Activated CD4-positive, alpha-beta T cell treated with anti-CD3 and anti-CD28 coated beads, Interleukin-2, amount 10 ng/mL, durations not matched to agents 24 days and 14 days (primary cell): ENCODE measurements at regions of chr15 and their contacts with region 1.

Region 1: DNA sequence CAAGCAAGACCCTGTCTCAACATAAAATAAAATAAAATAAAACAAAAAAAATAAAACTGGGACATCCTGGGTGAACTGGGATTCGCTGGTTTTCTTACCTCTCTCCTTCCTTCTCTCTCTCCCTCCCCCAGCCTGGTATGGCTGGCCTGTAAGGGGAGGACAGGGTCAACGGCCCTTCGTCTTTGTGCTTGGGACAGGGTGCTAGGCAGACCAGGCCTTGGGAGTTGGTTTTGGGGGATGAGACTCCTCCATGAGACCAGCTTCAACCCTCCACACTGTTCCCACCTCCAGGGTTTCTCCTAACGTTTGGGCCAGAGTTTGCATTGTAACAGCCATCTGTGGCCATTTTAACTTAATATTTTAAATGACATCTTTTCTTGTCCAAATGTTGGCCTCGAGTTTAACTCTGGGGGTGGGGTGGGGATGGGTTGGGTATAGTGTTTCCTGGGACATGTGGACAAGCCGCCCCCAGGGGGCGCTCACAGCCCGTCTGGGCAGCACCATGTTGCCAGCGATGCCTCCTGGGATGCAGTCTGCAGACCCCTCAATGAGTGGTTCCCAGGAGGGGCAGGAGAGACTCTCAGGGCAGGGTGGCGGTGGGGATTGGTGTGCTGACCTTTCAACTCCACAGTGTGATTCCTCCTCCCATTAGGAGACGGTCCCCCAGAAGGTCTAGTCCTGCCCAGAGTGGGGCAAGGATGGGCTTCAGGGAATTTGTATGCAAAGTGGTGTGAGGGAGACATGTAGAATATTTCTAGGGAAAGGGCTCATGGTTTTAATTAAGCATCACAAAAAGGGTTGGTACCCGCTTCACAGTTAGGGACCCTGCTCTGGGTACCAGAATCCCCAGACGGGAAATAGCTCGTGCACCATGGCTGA is 37.7 kb upstream of the LCTL start:
- DNase-seq: peak; percentile 90
- H3K4me3 Mint-ChIP-seq: no peak overlapping the region
- H3K27ac Mint-ChIP-seq: no peak overlapping the region
- H3K4me1 Mint-ChIP-seq: peaks cover under 1% of the 10 kb centered on the region
- H3K27me3 Mint-ChIP-seq: peaks cover 9% of the 10 kb centered on the region

Region 2: GRCh38 chr15:66535016-66535415 is 68.5 kb before region 1 on chr15:
- intact Hi-C with region 1: no loop called
- DNase-seq: no peak
- H3K4me3 Mint-ChIP-seq: no peak overlapping the region
- H3K27ac Mint-ChIP-seq: no peak overlapping the region
- H3K4me1 Mint-ChIP-seq: no peaks in the 10 kb centered on the region
- H3K27me3 Mint-ChIP-seq: no peaks in the 10 kb centered on the region

Region 3: GRCh38 chr15:66566963-66567531 is 36.5 kb before region 1 on chr15:
- intact Hi-C with region 1: no loop called
- DNase-seq: peak; percentile 87
- H3K4me3 Mint-ChIP-seq: peak overlapping the region; percentile 43
- H3K27ac Mint-ChIP-seq: peak overlapping the region; percentile 56
- H3K4me1 Mint-ChIP-seq: peaks cover 7% of the 10 kb centered on the region
- H3K27me3 Mint-ChIP-seq: no peaks in the 10 kb centered on the region

Region 4: GRCh38 chr15:66774001-66774814 is 170.7 kb after region 1 on chr15:
- intact Hi-C with region 1: loop called (anchors 1 kb)
- DNase-seq: peak; percentile 86
- H3K4me3 Mint-ChIP-seq: no peak overlapping the region
- H3K27ac Mint-ChIP-seq: no peak overlapping the region
- H3K4me1 Mint-ChIP-seq: no peaks in the 10 kb centered on the region
- H3K27me3 Mint-ChIP-seq: no peaks in the 10 kb centered on the region

Region 5: GRCh38 chr15:66851226-66852071 is 247.9 kb after region 1 on chr15:
- intact Hi-C with region 1: loop called (anchors 1 kb)
- DNase-seq: peak; percentile 93
- H3K4me3 Mint-ChIP-seq: peak overlapping the region; percentile 26
- H3K27ac Mint-ChIP-seq: no peak overlapping the region
- H3K4me1 Mint-ChIP-seq: peaks cover 6% of the 10 kb centered on the region
- H3K27me3 Mint-ChIP-seq: peaks cover 11% of the 10 kb centered on the region